Activated CD4-positive, alpha-beta memory T cell treated with anti-CD3 and anti-CD28 coated beads, Interleukin-2, amount 10 ng/mL, durations not matched to agents 7 days and 5 days (primary cell): ENCODE measurements at regions of chr17 and their contacts with region 1.

Region 1: DNA sequence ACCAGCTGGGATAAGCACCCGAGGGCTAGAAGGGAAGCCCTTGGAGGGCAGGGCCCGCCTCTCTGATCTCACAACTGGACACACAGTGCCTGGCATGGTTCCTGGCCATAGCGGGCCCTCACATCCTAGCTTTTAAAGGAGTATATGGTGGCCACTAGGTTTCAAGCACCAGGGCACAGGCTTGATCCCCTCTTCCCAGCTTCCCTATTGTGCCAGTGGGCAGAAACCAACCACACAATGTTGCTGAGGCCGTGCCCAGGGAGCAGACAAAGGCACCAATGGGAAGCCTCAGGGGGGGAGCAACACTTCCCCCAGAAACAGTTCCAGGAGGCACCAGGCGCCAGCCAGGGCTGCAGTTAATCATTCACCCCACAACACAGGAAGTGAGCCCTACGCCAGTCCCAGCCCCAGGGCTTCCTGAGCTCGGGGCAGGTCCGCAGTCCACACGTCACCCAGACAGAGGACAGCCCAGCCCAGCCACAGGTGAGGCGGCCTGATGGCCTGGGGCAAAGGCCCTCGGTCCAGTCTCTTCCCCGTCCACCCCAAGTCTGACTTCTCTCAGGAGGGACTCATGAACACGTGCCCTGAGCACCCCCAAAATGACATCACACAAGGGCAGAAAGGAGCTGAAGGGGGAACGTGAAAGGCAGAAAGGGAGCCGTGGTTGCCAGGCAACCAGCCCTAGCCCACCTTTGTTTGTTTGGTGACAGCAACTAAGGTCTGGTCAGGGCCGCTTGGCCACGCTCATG is 12.8 kb downstream of the SMIM5 start:
- DNase-seq: peak; percentile 34
- H3K4me3 Mint-ChIP-seq: no peak overlapping the region
- H3K27ac Mint-ChIP-seq: peak overlapping the region; percentile 28
- H3K4me1 Mint-ChIP-seq: peaks cover 17% of the 10 kb centered on the region
- H3K27me3 Mint-ChIP-seq: no peaks in the 10 kb centered on the region

Region 2: DNA sequence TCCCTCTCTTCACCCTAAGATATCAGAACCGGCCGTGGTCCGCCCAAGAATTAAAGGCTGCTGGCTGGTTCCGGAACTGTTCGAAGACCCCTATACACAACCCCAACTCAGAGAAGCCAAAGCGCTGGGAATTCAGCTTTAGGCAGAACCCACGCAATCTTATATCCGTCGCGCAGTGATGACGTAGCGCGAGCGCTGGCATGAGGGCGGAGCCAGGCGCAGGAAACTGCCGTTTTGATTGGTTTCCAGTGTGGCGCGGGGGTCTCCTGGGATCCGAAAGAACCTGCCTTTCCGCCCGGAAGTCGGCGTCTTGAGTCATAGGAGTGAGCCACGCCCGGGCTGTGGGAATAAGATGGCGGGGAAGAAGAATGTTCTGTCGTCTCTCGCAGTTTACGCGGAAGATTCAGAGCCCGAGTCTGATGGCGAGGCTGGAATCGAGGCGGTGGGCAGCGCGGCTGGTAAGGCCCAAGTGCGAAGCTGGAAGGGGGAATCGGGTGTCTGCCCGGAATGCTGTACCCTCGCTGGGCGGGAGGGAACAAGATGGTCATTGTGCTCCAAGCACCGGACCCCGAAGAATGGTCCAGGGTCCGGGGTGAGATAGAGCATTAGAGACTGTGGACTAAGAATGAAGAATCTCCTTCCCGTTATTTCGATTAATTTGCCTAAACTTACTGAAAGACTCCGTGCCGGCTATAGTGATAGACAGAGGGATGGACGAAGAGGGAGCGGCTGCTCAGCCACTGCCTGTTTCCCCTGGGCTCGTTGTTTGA is 21.1 kb after region 1 on chr17 and contains the starts of genes RECQL5 and SAP30BP:
- CTCF ChIA-PET with region 1: no interaction called
- POLR2A ChIA-PET with region 1: interaction called, 10 read pairs
- DNase-seq: peak; percentile 98
- H3K4me3 Mint-ChIP-seq: peak within 1 kb of the TSS; percentile 55
- H3K27ac Mint-ChIP-seq: peak within 1 kb of the TSS; percentile 23
- H3K4me1 Mint-ChIP-seq: peaks cover 28% of the 10 kb centered on the region
- H3K27me3 Mint-ChIP-seq: no peaks in the 10 kb centered on the region
- total RNA-seq, gene RECQL5: 38.3 TPM
- total RNA-seq, gene SAP30BP: 87.2 to 89.6 TPM